ENCODE measurements at regions of chr11 and their contacts with region 1.

Region 1: DNA sequence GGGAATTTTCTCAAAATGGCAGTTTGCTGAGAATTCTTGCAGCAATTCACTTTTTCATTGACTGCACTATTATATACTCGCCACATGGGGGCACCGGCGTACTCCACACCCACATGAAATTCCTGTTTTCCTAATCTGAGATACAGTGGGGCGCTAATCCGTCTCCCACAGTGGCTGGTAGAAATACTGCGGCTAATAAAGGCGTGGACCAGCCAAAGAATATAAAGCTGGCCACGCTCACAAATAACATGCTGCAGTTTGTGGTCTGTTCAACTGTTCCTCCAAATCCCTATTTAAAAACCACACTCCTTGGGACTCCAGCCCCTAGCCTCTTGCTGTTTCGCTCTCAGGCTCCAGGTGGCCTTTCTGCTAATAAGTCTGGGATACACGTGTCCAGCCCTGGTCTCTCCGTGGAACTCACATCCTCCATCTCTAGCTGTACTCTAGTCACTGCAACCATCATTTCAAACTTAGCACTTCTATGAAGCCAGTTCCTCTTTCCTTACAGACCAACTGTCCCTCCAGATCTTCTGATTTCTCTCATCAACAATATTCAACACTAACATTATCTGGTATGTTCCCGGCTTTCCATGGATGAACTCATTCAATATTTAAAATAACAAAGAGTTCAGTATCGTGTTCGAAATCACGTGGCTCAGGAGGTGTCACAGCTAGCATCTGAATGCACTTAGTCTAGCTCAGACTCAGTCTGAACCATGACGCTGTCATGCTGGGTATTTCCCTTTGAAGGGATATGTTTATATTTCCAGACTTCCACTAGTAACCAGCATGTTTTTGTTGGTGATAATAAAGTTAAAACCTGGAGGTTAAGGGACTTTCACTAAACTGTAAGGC is 22.0 kb downstream of the TBRG1 start:
- DNase-seq: peak in 7 of 9 donors; percentile 6 to 28 (median 21)
- ATAC-seq: peak; percentile 88
- H3K4me3 ChIP-seq: no peak overlapping the region
- H3K4me3 Mint-ChIP-seq: no peak overlapping the region
- H3K27ac ChIP-seq: no peak overlapping the region
- H3K27ac Mint-ChIP-seq: no peak overlapping the region
- H3K4me1 ChIP-seq: no peaks in the 10 kb centered on the region
- H3K4me1 Mint-ChIP-seq: peaks cover 3 to 11% (median 5%) of the 10 kb centered on the region in 7 donors
- H3K27me3 ChIP-seq: no peaks in the 10 kb centered on the region
- H3K27me3 Mint-ChIP-seq: no peaks in the 10 kb centered on the region

Region 2: DNA sequence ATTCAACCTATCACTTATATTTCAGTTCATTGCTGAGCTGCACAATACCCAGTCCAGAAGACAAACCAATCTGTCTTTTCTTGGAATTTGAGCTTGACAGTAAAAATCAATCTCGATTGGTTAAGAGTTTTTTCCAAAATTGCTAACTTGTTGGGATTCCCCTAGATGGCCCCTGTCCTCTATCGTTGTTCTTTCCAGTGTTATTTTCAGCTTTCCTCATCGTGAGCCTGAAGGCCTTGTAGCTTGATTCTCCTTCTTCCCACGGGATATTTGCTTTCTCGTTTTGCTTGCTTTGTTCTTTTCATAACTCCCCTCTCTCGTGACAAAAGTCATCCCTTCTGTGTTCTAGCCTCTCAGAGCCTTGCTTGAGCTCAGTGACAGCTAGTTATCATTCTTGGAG is 202.2 kb before region 1 on chr11:
- CTCF ChIA-PET with region 1: no interaction called
- POLR2A ChIA-PET with region 1: no interaction called
- intact Hi-C with region 1: no loop called
- DNase-seq: no peak
- ATAC-seq: no peak
- H3K4me3 ChIP-seq: no peak overlapping the region
- H3K4me3 Mint-ChIP-seq: no peak overlapping the region
- H3K27ac ChIP-seq: no peak overlapping the region
- H3K27ac Mint-ChIP-seq: no peak overlapping the region
- H3K4me1 ChIP-seq: no peaks in the 10 kb centered on the region
- H3K4me1 Mint-ChIP-seq: no peaks in the 10 kb centered on the region
- H3K27me3 ChIP-seq: no peaks in the 10 kb centered on the region
- H3K27me3 Mint-ChIP-seq: peaks cover 0 to 37% (median 32%) of the 10 kb centered on the region in 5 donors

Region 3: DNA sequence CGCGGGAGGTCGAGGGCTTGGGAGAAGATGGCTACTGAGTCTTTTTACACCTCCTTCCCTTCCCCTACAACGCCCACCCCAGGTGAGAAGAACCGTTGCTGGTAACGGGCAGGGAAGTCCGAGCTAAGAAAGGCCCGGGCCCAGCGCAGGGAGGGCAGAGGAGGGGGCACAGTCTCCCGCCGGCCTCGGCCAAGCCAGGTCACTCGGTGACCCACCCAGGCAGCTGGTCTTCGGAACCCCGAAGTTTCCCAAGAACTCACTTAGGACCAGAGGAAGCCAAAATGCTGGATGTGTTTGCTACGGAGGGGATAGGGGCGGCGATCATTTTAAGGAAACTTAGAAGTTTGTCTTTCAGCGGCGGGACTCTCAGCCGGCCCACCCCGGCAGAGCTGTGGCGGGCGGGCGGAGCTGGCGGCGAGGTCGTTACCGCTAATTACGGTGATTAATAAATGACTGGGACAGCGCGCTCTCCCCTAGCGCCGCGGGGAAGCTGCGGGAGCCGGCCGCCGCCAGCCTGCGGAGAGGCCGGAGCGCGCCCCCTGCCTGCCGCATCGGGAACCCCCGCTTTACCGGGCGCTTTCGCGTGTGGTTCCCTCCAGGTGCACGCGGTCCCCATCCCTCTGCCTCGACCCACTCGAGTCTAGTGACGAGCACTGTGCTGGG is 221.4 kb after region 1 on chr11:
- CTCF ChIA-PET with region 1: interaction called, 3 read pairs
- POLR2A ChIA-PET with region 1: no interaction called
- intact Hi-C with region 1: loop called in 1 of 2 experiments (anchors 1 kb)
- DNase-seq: peak in 8 of 9 donors; percentile 27 to 61 (median 46)
- ATAC-seq: peak; percentile 72
- H3K4me3 ChIP-seq: no peak overlapping the region
- H3K4me3 Mint-ChIP-seq: peak overlapping the region in 7 of 10 donors; percentile 37 to 68 (median 51)
- H3K27ac ChIP-seq: no peak overlapping the region
- H3K27ac Mint-ChIP-seq: peak overlapping the region in 1 of 9 donors; percentile 54
- H3K4me1 ChIP-seq: peaks cover 5 to 29% of the 10 kb centered on the region in 2 donors
- H3K4me1 Mint-ChIP-seq: peaks cover 7 to 67% (median 43%) of the 10 kb centered on the region in 7 donors
- H3K27me3 ChIP-seq: peaks cover 20 to 70% of the 10 kb centered on the region in 2 donors
- H3K27me3 Mint-ChIP-seq: peaks cover 80 to 97% (median 91%) of the 10 kb centered on the region in 5 donors